ENCODE measurements at regions of chr17 and their contacts with region 1.

Region 1: DNA sequence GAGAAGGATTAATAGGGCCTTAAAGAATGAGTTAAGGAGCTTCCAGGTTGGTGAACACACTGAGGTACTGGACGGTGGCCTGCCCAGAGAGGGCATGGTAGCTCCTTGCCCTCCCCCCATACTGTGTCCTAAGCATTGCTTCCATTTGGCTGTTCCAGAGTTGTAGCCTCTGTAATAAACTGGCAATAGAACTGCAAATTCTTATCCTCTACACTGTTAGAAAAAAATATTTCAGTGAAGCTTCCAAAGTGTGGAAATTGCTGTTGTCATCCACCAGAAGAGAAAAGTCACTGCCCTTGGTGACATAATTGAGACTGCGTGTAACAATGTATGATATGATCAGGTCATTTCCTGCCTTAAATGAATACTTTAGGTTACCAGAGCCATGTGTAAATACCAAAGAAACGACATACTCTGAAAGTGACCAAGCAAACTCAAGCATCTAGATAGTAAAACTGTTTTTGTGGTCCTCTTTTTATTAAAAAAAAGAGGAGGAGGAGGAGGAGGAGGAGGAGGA is 65.9 kb downstream of the CEP95 start:
- DNase-seq: peak; percentile 61
- ATAC-seq: peak; percentile 18
- H3K4me3 ChIP-seq: no peak overlapping the region
- H3K27ac ChIP-seq: peak overlapping the region; percentile 42; the same call in 1 of the 2 replicates
- H3K4me1 ChIP-seq: peaks cover 8% of the 10 kb centered on the region; the same call in 1 of the 2 replicates
- H3K27me3 ChIP-seq: no peaks in the 10 kb centered on the region
- CTCF ChIP-seq: no peak
- POLR2A ChIP-seq: no peak
- RAD21 ChIP-seq: no peak

Region 2: GRCh38 chr17:62627219-62627910 is 1945.3 kb before region 1 on chr17 and contains the start of gene MRC2:
- CTCF ChIA-PET with region 1: no interaction called
- POLR2A ChIA-PET with region 1: interaction called, 20 read pairs
- dilution Hi-C with region 1: no loop called
- in situ Hi-C with region 1: no loop called
- intact Hi-C with region 1: no loop called
- DNase-seq: peak; percentile 82
- ATAC-seq: peak; percentile 73
- H3K4me3 ChIP-seq: peak within 1 kb of the TSS; percentile 64
- H3K27ac ChIP-seq: peak within 1 kb of the TSS; percentile 94
- H3K4me1 ChIP-seq: peaks cover 29% of the 10 kb centered on the region
- H3K27me3 ChIP-seq: no peaks in the 10 kb centered on the region
- CTCF ChIP-seq: no peak
- POLR2A ChIP-seq: peak; percentile 90
- RAD21 ChIP-seq: no peak
- total RNA-seq, gene MRC2: 37.5 and 39.3 TPM in 2 replicates

Region 3: GRCh38 chr17:64355536-64356303 is 217.0 kb before region 1 on chr17:
- CTCF ChIA-PET with region 1: no interaction called
- POLR2A ChIA-PET with region 1: no interaction called
- dilution Hi-C with region 1: no loop called
- in situ Hi-C with region 1: no loop called
- intact Hi-C with region 1: no loop called
- DNase-seq: peak; percentile 43
- ATAC-seq: no peak
- H3K4me3 ChIP-seq: no peak overlapping the region
- H3K27ac ChIP-seq: no peak overlapping the region
- H3K4me1 ChIP-seq: 0 out of 2 replicates have a peak, but pooled peaks cover 2% of the 10 kb centered on the region
- H3K27me3 ChIP-seq: peaks cover 38% of the 10 kb centered on the region
- CTCF ChIP-seq: no peak
- POLR2A ChIP-seq: no peak
- RAD21 ChIP-seq: no peak

Region 4: DNA sequence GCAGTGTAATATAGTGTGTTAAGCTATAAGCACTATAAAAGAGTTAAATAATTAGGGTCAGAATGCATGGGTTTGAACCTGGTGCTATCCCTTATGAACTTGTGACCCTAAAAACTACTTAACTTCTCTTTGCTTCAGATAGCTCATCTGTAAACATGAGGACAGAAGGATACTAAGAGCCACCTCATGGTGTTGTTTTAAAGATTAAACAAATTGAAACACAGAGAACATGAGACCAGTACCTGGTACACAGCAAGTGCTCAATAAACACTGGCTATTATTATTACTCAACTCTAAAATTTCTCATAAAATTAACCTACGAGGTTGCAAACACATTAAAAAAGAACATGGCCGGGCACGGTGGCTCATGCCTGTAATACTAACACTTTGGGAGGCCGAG is 46.2 kb after region 1 on chr17:
- CTCF ChIA-PET with region 1: no interaction called
- POLR2A ChIA-PET with region 1: no interaction called
- dilution Hi-C with region 1: no loop called
- in situ Hi-C with region 1: no loop called
- intact Hi-C with region 1: no loop called
- DNase-seq: no peak
- ATAC-seq: no peak
- H3K4me3 ChIP-seq: no peak overlapping the region
- H3K27ac ChIP-seq: no peak overlapping the region
- H3K4me1 ChIP-seq: peaks cover 11% of the 10 kb centered on the region
- H3K27me3 ChIP-seq: no peaks in the 10 kb centered on the region
- CTCF ChIP-seq: no peak
- POLR2A ChIP-seq: no peak
- RAD21 ChIP-seq: no peak

Measured in IMR-90 (cell line).